Activated CD4-positive, alpha-beta T cell treated with anti-CD3 and anti-CD28 coated beads, Interleukin-2, amount 10 ng/mL, durations not matched to agents 24 days and 14 days (primary cell): ENCODE measurements at regions of chr10 and their contacts with region 1.

Region 1: GRCh38 chr10:60646966-60647796 is 131.1 kb upstream of the CDK1 start:
- DNase-seq: peak; percentile 85
- H3K4me3 Mint-ChIP-seq: no peak overlapping the region
- H3K27ac Mint-ChIP-seq: no peak overlapping the region
- H3K4me1 Mint-ChIP-seq: peaks cover 14% of the 10 kb centered on the region
- H3K27me3 Mint-ChIP-seq: no peaks in the 10 kb centered on the region

Region 2: GRCh38 chr10:60099998-60100747 is 547.0 kb before region 1 on chr10:
- intact Hi-C with region 1: loop called (anchors 1 kb)
- DNase-seq: peak; percentile 66
- H3K4me3 Mint-ChIP-seq: no peak overlapping the region
- H3K27ac Mint-ChIP-seq: no peak overlapping the region
- H3K4me1 Mint-ChIP-seq: no peaks in the 10 kb centered on the region
- H3K27me3 Mint-ChIP-seq: no peaks in the 10 kb centered on the region

Region 3: DNA sequence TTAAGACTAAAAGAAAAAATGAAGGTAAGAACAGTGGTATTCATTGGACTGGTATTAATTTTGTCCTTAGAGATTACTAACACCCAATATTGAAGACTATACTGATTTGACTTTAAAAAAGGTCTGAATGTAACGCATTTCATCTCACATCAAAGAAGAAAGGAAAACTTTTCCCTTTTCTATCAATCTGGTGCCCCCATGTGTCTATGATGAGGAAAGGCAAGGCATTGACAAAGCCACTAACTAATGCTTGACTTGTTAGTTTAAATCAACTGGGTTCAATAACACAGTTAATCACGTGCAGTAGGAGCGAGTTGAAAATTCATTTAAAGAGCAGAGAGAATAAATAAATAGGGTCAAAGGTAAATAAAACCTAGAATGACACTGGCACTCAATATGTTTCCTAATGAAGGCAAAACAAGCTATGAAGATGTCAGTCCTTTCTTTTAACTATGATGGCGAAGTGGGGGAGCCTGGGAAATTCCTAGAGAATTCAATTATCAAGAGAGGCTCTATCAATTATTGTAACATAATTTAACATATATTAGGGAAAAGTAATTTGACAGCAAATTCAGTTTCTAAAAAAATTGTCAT is 438.4 kb before region 1 on chr10:
- intact Hi-C with region 1: loop called (anchors 10 kb)
- DNase-seq: no peak
- H3K4me3 Mint-ChIP-seq: no peak overlapping the region
- H3K27ac Mint-ChIP-seq: peak overlapping the region; percentile 54
- H3K4me1 Mint-ChIP-seq: peaks cover 31% of the 10 kb centered on the region
- H3K27me3 Mint-ChIP-seq: no peaks in the 10 kb centered on the region

Region 4: DNA sequence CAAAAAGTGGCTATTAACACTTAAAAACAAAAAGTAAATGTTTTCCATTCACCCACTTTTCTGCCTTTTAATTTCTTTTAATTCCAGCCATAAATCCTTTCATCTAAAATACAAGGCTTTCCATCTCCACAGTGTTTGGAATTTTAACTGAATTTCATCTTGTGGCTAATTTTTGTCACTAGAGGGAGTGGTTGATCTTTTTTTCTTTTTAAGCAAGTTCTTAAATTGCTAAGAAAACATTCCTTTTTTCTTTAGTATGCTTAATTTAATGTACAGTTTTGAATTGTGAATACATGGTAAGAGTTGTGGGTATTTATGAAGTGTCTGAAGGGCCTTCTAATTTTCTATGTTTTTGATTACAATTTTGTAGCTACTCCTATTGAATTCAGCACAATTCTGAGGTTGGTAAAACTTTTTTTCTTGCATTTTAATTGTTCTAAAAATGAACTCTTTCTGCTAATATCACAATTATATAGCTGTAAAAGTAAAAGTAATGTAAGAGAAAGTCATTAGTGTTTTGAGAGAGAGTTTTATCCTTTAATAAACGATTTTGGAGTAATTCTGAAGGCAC is 202.6 kb before region 1 on chr10:
- intact Hi-C with region 1: loop called (anchors 1 kb)
- DNase-seq: no peak
- H3K4me3 Mint-ChIP-seq: no peak overlapping the region
- H3K27ac Mint-ChIP-seq: no peak overlapping the region
- H3K4me1 Mint-ChIP-seq: peaks cover 8% of the 10 kb centered on the region
- H3K27me3 Mint-ChIP-seq: no peaks in the 10 kb centered on the region

Region 5: GRCh38 chr10:60549686-60550085 is 97.5 kb before region 1 on chr10:
- intact Hi-C with region 1: loop called (anchors 1 kb)
- DNase-seq: no peak
- H3K4me3 Mint-ChIP-seq: no peak overlapping the region
- H3K27ac Mint-ChIP-seq: no peak overlapping the region
- H3K4me1 Mint-ChIP-seq: no peaks in the 10 kb centered on the region
- H3K27me3 Mint-ChIP-seq: no peaks in the 10 kb centered on the region

Region 6: DNA sequence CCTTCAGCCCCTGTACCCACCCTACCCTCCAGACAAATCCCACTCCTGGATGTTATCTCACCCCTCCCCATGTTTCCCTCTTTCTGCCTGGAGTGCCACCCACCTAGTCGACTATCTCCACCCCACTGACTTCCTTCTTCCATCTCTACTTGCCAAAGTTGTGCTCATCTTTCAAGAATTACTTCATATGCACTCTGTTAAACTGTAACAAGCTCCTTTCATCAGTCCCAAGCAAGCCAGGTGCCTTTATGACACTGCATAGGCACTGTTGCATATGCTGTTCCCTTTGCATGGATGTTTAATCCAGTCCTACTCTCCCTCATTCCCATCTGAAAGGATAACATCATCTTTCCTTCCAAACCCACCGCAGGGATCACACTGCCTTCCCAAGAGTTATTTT is 122.2 kb after region 1 on chr10:
- intact Hi-C with region 1: loop called (anchors 5 kb)
- DNase-seq: no peak
- H3K4me3 Mint-ChIP-seq: no peak overlapping the region
- H3K27ac Mint-ChIP-seq: no peak overlapping the region
- H3K4me1 Mint-ChIP-seq: peaks cover 20% of the 10 kb centered on the region
- H3K27me3 Mint-ChIP-seq: peaks cover 5% of the 10 kb centered on the region